ENCODE measurements at regions of chr7 and their contacts with region 1.

Region 1: DNA sequence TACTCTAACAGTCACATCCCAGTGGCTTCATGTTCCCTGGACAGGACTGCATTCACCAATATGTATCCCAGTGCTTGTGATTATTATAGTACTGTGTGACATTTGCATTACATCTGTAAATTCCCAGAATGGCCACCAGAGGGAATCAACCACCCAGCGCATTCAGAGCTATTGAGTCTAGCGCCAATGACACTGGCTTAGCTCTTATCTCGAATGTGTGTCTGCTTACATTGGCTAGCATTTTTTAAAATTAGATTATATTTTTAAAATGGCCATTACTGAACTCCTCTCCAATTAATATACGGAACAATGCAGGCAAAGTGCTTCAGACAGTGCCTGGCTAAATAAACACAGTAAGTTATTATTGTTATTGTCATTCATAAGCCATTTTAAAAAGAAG is 36.3 kb downstream of the TRIL start:
- DNase-seq: peak in 8 of 9 experiments; percentile 5 to 70 (median 32)
- ATAC-seq: peak; percentile 88
- H3K4me3 ChIP-seq: no peak overlapping the region
- H3K4me3 Mint-ChIP-seq: no peak overlapping the region
- H3K27ac ChIP-seq: no peak overlapping the region
- H3K27ac Mint-ChIP-seq: no peak overlapping the region
- H3K4me1 ChIP-seq: peaks cover 6% of the 10 kb centered on the region
- H3K4me1 Mint-ChIP-seq: peaks cover 15% of the 10 kb centered on the region
- H3K27me3 ChIP-seq: no peaks in the 10 kb centered on the region
- H3K27me3 Mint-ChIP-seq: no peaks in the 10 kb centered on the region
- CTCF ChIP-seq: peak; percentile 74

Region 2: DNA sequence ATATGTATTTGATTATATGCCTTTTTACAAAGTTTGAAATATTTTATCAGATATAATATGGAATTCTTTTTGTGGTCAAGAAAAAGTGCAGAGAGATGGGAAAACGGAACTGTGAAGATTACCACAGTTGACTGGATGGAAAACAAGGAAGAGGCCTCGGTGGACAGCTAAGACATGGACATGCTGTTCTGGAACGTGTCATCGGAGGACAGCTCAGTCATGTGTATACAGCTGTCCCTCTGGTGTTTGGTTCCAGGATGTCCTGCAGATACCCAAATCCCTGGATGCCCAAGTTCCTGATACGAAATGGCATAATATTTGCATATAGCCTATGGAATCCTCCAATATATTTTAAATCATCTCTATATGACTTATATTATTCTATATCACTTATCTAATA is 13.0 kb before region 1 on chr7:
- CTCF ChIA-PET with region 1: interaction called, 26 read pairs
- POLR2A ChIA-PET with region 1: no interaction called
- intact Hi-C with region 1: no loop called
- DNase-seq: no peak
- ATAC-seq: no peak
- H3K4me3 ChIP-seq: no peak overlapping the region
- H3K4me3 Mint-ChIP-seq: no peak overlapping the region
- H3K27ac ChIP-seq: no peak overlapping the region
- H3K27ac Mint-ChIP-seq: no peak overlapping the region
- H3K4me1 ChIP-seq: no peaks in the 10 kb centered on the region
- H3K4me1 Mint-ChIP-seq: no peaks in the 10 kb centered on the region
- H3K27me3 ChIP-seq: no peaks in the 10 kb centered on the region
- H3K27me3 Mint-ChIP-seq: peaks cover 16% of the 10 kb centered on the region
- CTCF ChIP-seq: no peak

Region 3: DNA sequence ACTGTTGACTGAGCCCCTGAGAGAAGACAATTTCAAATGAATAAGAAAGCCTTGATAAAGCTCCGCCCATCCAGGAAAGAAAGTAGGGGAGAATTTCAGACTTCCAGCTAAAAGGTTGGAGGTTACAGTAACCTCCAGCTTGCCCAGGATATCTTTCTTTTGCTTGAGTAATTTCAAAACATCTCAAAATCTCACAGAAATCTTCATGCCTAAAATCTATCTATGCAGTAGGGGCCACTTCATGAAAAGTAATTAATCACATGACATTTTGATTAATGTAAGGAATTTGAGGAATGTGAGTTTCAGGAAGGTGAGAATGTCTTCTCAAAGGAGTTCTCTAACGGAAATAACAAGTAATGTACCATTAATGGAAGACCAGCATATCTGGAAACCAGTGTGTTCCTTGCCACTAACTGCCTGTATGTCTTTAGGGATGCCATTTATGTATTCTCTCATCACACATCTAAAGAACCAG is 12.1 kb after region 1 on chr7:
- CTCF ChIA-PET with region 1: interaction called, 20 read pairs
- POLR2A ChIA-PET with region 1: no interaction called
- intact Hi-C with region 1: no loop called
- DNase-seq: no peak
- ATAC-seq: no peak
- H3K4me3 ChIP-seq: no peak overlapping the region
- H3K4me3 Mint-ChIP-seq: no peak overlapping the region
- H3K27ac ChIP-seq: no peak overlapping the region
- H3K27ac Mint-ChIP-seq: no peak overlapping the region
- H3K4me1 ChIP-seq: no peaks in the 10 kb centered on the region
- H3K4me1 Mint-ChIP-seq: no peaks in the 10 kb centered on the region
- H3K27me3 ChIP-seq: peaks cover 0 to 2% of the 10 kb centered on the region in 2 experiments
- H3K27me3 Mint-ChIP-seq: peaks cover 26% of the 10 kb centered on the region
- CTCF ChIP-seq: no peak

Region 4: GRCh38 chr7:29105752-29106668 is 184.2 kb after region 1 on chr7:
- CTCF ChIA-PET with region 1: interaction called, 17 read pairs
- POLR2A ChIA-PET with region 1: no interaction called
- intact Hi-C with region 1: loop called (anchors 1 kb)
- DNase-seq: peak in 2 of 9 experiments; percentile 40 to 54
- ATAC-seq: no peak
- H3K4me3 ChIP-seq: no peak overlapping the region
- H3K4me3 Mint-ChIP-seq: no peak overlapping the region
- H3K27ac ChIP-seq: no peak overlapping the region
- H3K27ac Mint-ChIP-seq: no peak overlapping the region
- H3K4me1 ChIP-seq: no peaks in the 10 kb centered on the region
- H3K4me1 Mint-ChIP-seq: peaks cover 3% of the 10 kb centered on the region
- H3K27me3 ChIP-seq: no peaks in the 10 kb centered on the region
- H3K27me3 Mint-ChIP-seq: no peaks in the 10 kb centered on the region
- CTCF ChIP-seq: no peak

Region 5: DNA sequence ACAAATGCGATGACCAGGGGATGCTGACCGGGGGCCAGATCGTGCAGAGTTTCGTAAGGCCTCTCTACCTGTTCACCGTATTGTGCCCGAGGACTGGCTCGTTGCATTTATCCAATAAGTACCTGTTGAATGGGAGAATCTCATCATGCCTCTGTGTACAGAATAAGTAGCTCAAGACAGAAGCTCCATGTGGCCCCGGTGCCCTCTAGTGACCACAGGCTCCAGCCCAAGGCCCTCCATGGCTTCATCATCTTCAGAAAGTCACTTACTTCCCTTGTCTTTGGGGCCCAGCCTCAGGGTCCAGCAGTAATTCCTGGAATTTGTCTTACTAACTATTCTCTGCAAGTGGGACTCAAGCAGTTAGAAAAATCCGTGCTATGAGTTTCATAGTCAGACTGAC is 423.8 kb after region 1 on chr7:
- CTCF ChIA-PET with region 1: interaction called, 4 read pairs
- POLR2A ChIA-PET with region 1: no interaction called
- intact Hi-C with region 1: loop called (anchors 2 to 10 kb)
- DNase-seq: peak in 6 of 9 experiments; percentile 15 to 55 (median 40)
- ATAC-seq: peak; percentile 48
- H3K4me3 ChIP-seq: no peak overlapping the region
- H3K4me3 Mint-ChIP-seq: no peak overlapping the region
- H3K27ac ChIP-seq: no peak overlapping the region
- H3K27ac Mint-ChIP-seq: no peak overlapping the region
- H3K4me1 ChIP-seq: peaks cover 11% of the 10 kb centered on the region
- H3K4me1 Mint-ChIP-seq: peaks cover 4% of the 10 kb centered on the region
- H3K27me3 ChIP-seq: no peaks in the 10 kb centered on the region
- H3K27me3 Mint-ChIP-seq: no peaks in the 10 kb centered on the region
- CTCF ChIP-seq: no peak

Region 6: GRCh38 chr7:29408841-29409243 is 487.0 kb after region 1 on chr7:
- CTCF ChIA-PET with region 1: interaction called, 244 read pairs
- POLR2A ChIA-PET with region 1: interaction called, 3 read pairs
- intact Hi-C with region 1: loop called (anchors 1 kb)
- DNase-seq: peak; percentile 5 to 77 (median 55)
- ATAC-seq: peak; percentile 67
- H3K4me3 ChIP-seq: no peak overlapping the region
- H3K4me3 Mint-ChIP-seq: no peak overlapping the region
- H3K27ac ChIP-seq: no peak overlapping the region
- H3K27ac Mint-ChIP-seq: no peak overlapping the region
- H3K4me1 ChIP-seq: no peaks in the 10 kb centered on the region
- H3K4me1 Mint-ChIP-seq: no peaks in the 10 kb centered on the region
- H3K27me3 ChIP-seq: no peaks in the 10 kb centered on the region
- H3K27me3 Mint-ChIP-seq: peaks cover 4% of the 10 kb centered on the region
- CTCF ChIP-seq: peak; percentile 86

Region 7: GRCh38 chr7:29921404-29922010 is 999.7 kb after region 1 on chr7:
- CTCF ChIA-PET with region 1: interaction called, 6 read pairs
- POLR2A ChIA-PET with region 1: no interaction called
- intact Hi-C with region 1: loop called in 1 of 2 experiments (anchors 2 kb)
- DNase-seq: peak in 8 of 9 experiments; percentile 6 to 67 (median 40)
- ATAC-seq: peak; percentile 92
- H3K4me3 ChIP-seq: no peak overlapping the region
- H3K4me3 Mint-ChIP-seq: no peak overlapping the region
- H3K27ac ChIP-seq: no peak overlapping the region
- H3K27ac Mint-ChIP-seq: no peak overlapping the region
- H3K4me1 ChIP-seq: no peaks in the 10 kb centered on the region
- H3K4me1 Mint-ChIP-seq: no peaks in the 10 kb centered on the region
- H3K27me3 ChIP-seq: peaks cover 0 to 2% of the 10 kb centered on the region in 2 experiments
- H3K27me3 Mint-ChIP-seq: no peaks in the 10 kb centered on the region
- CTCF ChIP-seq: peak; percentile 90